ENCODE measurements at regions of chr9 and their contacts with region 1.

Region 1: DNA sequence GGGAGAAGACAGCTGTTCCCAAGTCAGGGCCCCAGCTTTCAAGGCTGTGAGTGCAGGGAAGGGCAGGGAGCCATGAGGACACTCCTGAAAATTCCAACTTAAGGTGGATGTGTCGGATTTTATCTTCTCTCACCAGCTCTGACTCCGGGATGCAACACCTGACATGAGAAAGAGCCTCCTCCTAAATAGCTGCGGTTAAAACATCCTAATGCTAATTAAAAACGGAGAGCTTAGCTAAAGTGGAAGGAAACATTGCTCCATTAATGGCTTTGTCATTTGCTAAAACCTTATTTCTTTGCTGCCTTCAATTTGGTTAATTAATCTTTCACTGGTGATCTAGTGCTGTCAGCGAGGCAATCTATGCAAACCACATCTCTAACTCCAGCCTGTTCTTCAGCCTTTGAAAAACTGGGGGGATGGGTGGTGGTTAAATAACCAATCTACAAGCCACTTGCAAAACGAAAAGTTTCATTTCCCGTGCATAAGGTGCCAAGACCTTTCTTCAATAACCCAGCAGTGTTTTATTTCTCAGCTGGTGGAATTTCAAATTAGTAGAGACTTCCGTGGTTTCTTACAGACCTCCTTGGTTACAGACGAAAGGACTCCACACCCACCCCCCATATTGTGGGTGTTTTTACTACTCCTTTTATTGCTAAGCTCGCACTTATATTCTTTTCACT is 379.6 kb downstream of the MLLT3 start:
- DNase-seq: no peak
- ATAC-seq: no peak
- H3K4me3 ChIP-seq: no peak overlapping the region
- H3K27ac ChIP-seq: no peak overlapping the region
- H3K4me1 ChIP-seq: no peaks in the 10 kb centered on the region
- H3K27me3 ChIP-seq: peaks cover 15% of the 10 kb centered on the region
- CTCF ChIP-seq: no peak
- POLR2A ChIP-seq: no peak
- RAD21 ChIP-seq: no peak

Region 2: DNA sequence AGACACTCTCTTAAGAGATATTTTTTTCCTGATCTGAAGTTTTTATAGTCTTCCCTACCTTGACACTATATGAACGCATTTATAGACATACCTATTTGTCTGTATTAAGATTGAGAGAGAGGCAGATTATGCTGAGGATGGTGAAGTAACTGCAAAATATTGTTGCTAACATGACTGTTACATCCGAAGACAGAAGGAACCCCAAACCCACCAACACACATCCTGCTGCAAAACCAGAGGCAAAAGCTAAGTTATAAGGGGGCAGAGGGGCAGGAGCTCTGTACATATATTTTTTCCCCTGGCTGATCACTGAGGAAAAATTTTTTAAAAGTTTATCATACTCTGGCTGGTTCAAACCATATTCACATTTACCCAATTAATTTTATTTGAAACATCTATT is 100.7 kb after region 1 on chr9:
- CTCF ChIA-PET with region 1: no interaction called
- POLR2A ChIA-PET with region 1: interaction called, 14 read pairs
- dilution Hi-C with region 1: no loop called
- in situ Hi-C with region 1: no loop called
- intact Hi-C with region 1: no loop called
- DNase-seq: no peak
- ATAC-seq: no peak
- H3K4me3 ChIP-seq: no peak overlapping the region
- H3K27ac ChIP-seq: no peak overlapping the region
- H3K4me1 ChIP-seq: no peaks in the 10 kb centered on the region; the same call in 1 of the 2 replicates
- H3K27me3 ChIP-seq: no peaks in the 10 kb centered on the region
- CTCF ChIP-seq: no peak
- POLR2A ChIP-seq: no peak
- RAD21 ChIP-seq: no peak